K562 (cell line): ENCODE measurements at regions of chr1 and their contacts with region 1.

Region 1: DNA sequence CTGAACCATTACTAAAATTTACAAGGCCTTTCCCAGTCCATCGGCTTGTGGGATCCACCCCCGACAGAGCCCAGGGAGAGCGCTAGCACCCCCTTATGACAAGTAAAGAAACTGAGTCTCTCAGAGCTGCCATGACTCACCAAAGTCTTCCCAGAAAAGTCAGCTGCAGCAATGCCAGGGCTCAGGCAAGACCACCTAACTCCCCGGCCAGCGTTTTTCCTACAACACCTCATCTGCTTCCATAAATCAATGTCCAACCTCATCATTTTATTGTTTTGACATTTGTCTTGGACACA is 15.0 kb downstream of the DHCR24 start:
- DNase-seq: peak in 1 of 4 experiments; percentile 22
- ATAC-seq: no peak
- H3K4me3 ChIP-seq: no peak overlapping the region
- H3K27ac ChIP-seq: no peak overlapping the region
- H3K4me1 ChIP-seq: no peaks in the 10 kb centered on the region
- H3K27me3 ChIP-seq: no peaks in the 10 kb centered on the region
- CTCF ChIP-seq: peak in 2 of 3 experiments; percentile 15 to 18; a peak in 1 of 6 replicates
- EP300 ChIP-seq: no peak
- POLR2A ChIP-seq: no peak
- RAD21 ChIP-seq: peak in 1 of 2 experiments; percentile 27; a peak in 2 of 4 replicates

Region 2: GRCh38 chr1:54861070-54861761 is 10.8 kb before region 1 on chr1:
- CTCF ChIA-PET with region 1: no interaction called
- POLR2A ChIA-PET with region 1: interaction called, 15 read pairs
- in situ Hi-C with region 1: no loop called
- intact Hi-C with region 1: no loop called
- DNase-seq: peak; percentile 56 to 71 (median 64)
- ATAC-seq: peak; percentile 92
- H3K4me3 ChIP-seq: no peak overlapping the region
- H3K27ac ChIP-seq: peak overlapping the region; percentile 56
- H3K4me1 ChIP-seq: peaks cover 21 to 32% of the 10 kb centered on the region in 2 experiments
- H3K27me3 ChIP-seq: no peaks in the 10 kb centered on the region
- CTCF ChIP-seq: 0 out of 6 replicates have a peak, but pooled peaks of 1 of the 3 experiments have one; percentile 9
- EP300 ChIP-seq: no peak
- POLR2A ChIP-seq: no peak
- RAD21 ChIP-seq: no peak